CD8-positive, alpha-beta T cell (primary cell): ENCODE measurements at regions of chr2 and their contacts with region 1.

Region 1: DNA sequence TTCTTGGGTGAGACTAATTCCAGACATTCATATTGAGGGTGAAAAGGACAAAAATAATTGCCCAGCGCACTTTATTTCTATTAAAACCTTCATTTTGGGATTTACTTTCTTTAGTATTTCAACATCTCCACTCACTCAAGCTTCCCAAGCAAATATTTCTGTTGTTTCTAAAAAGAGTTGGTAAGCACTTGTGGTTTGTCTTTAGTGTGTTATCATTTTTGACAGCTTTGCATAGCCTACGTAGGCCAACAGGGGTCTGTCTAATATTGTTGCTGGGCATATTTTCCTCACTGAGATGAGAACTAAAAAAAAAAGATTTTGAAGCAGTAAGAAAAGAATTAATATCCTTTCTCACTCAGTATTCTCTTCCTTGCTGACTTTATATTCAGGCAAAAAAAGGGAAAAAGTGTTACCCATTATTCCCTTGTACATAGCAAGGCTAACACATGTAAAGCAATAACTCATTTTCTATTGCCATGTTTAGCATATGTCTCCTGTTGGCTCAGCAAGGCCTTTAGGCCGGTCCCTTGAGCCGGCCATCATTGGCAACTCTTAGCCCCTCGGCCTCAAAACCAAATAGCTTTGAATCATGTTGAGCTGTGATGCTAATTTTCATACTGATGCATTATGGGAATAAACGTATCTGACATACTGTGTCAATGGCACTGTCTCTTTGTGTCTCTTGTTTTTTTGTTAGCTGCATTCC is 494.2 kb downstream of the ARHGAP15 start:
- DNase-seq: no peak
- ATAC-seq: no peak
- H3K4me3 ChIP-seq: no peak overlapping the region
- H3K4me3 Mint-ChIP-seq: no peak overlapping the region
- H3K27ac ChIP-seq: no peak overlapping the region
- H3K27ac Mint-ChIP-seq: no peak overlapping the region
- H3K4me1 ChIP-seq: no peaks in the 10 kb centered on the region
- H3K4me1 Mint-ChIP-seq: peaks cover 3% of the 10 kb centered on the region
- H3K27me3 ChIP-seq: no peaks in the 10 kb centered on the region
- H3K27me3 Mint-ChIP-seq: no peaks in the 10 kb centered on the region
- CTCF ChIP-seq: no peak

Region 2: GRCh38 chr2:143607231-143608062 is 15.9 kb before region 1 on chr2:
- CTCF ChIA-PET with region 1: no interaction called
- POLR2A ChIA-PET with region 1: no interaction called
- intact Hi-C with region 1: loop called in 1 of 2 experiments (anchors 1 kb)
- DNase-seq: no peak
- ATAC-seq: no peak
- H3K4me3 ChIP-seq: no peak overlapping the region
- H3K4me3 Mint-ChIP-seq: no peak overlapping the region
- H3K27ac ChIP-seq: no peak overlapping the region
- H3K27ac Mint-ChIP-seq: peak overlapping the region; percentile 0
- H3K4me1 ChIP-seq: no peaks in the 10 kb centered on the region
- H3K4me1 Mint-ChIP-seq: peaks cover 72% of the 10 kb centered on the region
- H3K27me3 ChIP-seq: no peaks in the 10 kb centered on the region
- H3K27me3 Mint-ChIP-seq: no peaks in the 10 kb centered on the region
- CTCF ChIP-seq: no peak

Region 3: DNA sequence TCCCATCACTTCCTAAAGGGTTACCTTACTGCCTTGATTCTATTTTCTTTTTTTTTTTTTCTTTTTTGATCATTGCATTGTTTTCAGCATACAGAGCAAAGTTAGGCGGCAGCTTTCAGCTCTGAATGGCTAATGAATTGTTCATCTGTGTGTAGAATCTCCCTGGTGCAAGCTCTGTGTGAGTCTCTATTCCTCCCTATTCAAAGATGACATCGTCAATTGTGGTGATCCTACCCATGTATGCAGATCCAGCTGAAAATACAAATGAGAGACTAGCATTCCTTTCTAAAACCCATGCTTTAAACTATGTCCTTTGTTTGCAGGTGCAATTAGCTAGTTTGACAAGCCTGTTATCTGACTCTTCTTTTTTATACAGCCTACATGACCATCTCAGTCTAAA is 44.9 kb after region 1 on chr2:
- CTCF ChIA-PET with region 1: no interaction called
- POLR2A ChIA-PET with region 1: no interaction called
- intact Hi-C with region 1: no loop called
- DNase-seq: no peak
- ATAC-seq: no peak
- H3K4me3 ChIP-seq: no peak overlapping the region
- H3K4me3 Mint-ChIP-seq: no peak overlapping the region
- H3K27ac ChIP-seq: no peak overlapping the region
- H3K27ac Mint-ChIP-seq: no peak overlapping the region
- H3K4me1 ChIP-seq: no peaks in the 10 kb centered on the region
- H3K4me1 Mint-ChIP-seq: peaks cover 7% of the 10 kb centered on the region
- H3K27me3 ChIP-seq: no peaks in the 10 kb centered on the region
- H3K27me3 Mint-ChIP-seq: no peaks in the 10 kb centered on the region
- CTCF ChIP-seq: no peak